A549 (cell line): ENCODE measurements at regions of chr5 and their contacts with region 1.

Region 1: GRCh38 chr5:53481887-53482716 is 1.7 kb downstream of the FST start:
- DNase-seq: peak; percentile 64 to 66
- ATAC-seq: peak; percentile 56 to 74
- H3K4me3 ChIP-seq: peak overlapping the region; percentile 61
- H3K27ac ChIP-seq: peak overlapping the region; percentile 47 to 73
- H3K4me1 ChIP-seq: peaks cover 8% of the 10 kb centered on the region; the same call in 1 of the 3 replicates
- CTCF ChIP-seq: no peak
- EP300 ChIP-seq: no peak
- POLR2A ChIP-seq: no peak
- RAD21 ChIP-seq: peak; percentile 13 to 22; a peak in 1 of 5 replicates

Region 2: DNA sequence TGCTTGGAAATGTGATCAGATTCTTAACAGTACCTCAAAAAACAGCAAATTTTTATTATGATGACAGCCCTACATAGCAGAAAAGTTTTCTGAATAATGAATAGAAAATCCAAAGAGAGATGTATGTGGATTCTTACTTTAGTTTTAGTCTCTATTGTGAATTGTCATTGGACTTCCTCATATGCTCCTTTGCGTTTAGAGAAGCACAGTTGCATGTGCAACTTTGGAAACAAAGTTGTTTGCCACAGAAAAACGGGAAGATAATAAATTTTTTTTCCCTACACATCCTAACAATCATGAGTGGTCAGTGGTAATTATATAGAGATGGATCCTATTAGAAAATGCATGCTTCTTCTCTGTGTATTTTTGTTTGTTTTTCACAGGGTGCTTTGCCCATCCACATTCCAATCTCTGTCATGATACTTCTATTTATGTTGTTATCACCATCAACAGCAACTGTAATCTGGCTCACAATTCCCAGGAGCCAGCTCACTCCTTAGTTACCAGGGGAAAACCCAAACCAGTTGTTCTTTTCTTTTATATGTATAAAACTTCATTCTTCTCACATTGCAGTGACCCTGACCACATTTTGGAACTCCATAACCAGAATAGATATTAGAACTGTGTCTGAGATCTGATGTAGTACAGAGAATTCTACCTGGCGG is 197.0 kb after region 1 on chr5:
- CTCF ChIA-PET with region 1: no interaction called
- POLR2A ChIA-PET with region 1: no interaction called
- DNase-seq: peak in 1 of 2 experiments; percentile 30
- ATAC-seq: no peak
- H3K4me3 ChIP-seq: no peak overlapping the region
- H3K27ac ChIP-seq: no peak overlapping the region
- H3K4me1 ChIP-seq: no peaks in the 10 kb centered on the region
- CTCF ChIP-seq: no peak
- EP300 ChIP-seq: no peak
- POLR2A ChIP-seq: no peak
- RAD21 ChIP-seq: no peak

Region 3: DNA sequence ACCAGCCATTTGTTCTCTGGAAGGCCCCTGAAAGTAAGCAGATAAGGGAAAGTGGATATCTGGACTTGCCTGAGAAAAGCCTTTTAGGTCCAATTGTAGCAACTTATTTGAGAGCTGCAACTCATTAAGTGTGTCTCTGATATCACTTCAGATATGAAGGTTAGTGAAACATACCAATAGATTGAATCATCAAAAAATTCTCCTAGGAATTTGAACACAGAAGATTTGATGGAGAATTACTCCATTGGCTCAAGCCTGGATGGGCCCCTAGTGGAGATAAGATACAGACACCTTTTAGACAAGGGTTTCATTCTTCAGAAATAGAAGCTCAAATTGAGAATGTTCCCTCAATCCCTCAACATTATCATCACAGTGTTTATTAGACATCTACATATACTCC is 435.0 kb after region 1 on chr5:
- CTCF ChIA-PET with region 1: no interaction called
- POLR2A ChIA-PET with region 1: interaction called, 10 read pairs
- DNase-seq: peak; percentile 18
- ATAC-seq: peak in 1 of 2 experiments; percentile 65; a peak in 3 of 6 replicates
- H3K4me3 ChIP-seq: no peak overlapping the region
- H3K27ac ChIP-seq: no peak overlapping the region
- H3K4me1 ChIP-seq: peaks cover 7% of the 10 kb centered on the region; the same call in 2 of the 3 replicates
- CTCF ChIP-seq: no peak
- EP300 ChIP-seq: no peak
- POLR2A ChIP-seq: no peak
- RAD21 ChIP-seq: 0 out of 5 replicates have a peak, but pooled peaks of 1 of the 2 experiments have one; percentile 25